ENCODE measurements at regions of chr11 and their contacts with region 1.

Region 1: DNA sequence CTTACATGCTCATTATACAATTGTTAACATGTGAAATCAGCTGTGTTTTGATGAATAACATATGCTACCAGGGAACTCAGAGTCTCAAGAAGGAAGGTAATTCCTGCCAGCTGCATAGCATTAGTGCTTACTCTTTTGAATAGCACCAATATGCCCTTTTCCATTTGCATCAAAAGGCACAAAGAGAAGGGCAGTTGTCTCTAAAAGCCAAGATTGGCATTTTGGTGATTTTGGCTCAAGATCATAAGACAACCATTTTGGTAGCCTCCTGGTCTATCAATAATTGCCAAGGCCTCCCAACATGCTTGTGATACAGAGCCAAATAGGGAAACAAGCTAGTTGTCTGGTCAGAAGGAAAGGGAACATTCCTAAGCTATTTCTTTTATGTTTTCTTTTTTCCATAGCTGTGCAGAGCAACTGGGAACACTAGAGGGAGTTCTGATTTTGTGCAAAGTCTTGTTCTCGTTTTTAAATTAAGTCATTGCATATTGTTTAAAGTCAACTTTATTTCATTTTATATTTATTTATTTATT is 416.7 kb upstream of the CHORDC1 start:
- DNase-seq: peak; percentile 34
- H3K4me3 Mint-ChIP-seq: no peak overlapping the region
- H3K27ac Mint-ChIP-seq: no peak overlapping the region
- H3K4me1 Mint-ChIP-seq: no peaks in the 10 kb centered on the region
- H3K27me3 Mint-ChIP-seq: no peaks in the 10 kb centered on the region
- CTCF ChIP-seq: peak; percentile 58

Region 2: GRCh38 chr11:90661233-90661632 is 21.7 kb after region 1 on chr11:
- CTCF ChIA-PET with region 1: no interaction called
- POLR2A ChIA-PET with region 1: no interaction called
- intact Hi-C with region 1: no loop called
- DNase-seq: no peak
- H3K4me3 Mint-ChIP-seq: no peak overlapping the region
- H3K27ac Mint-ChIP-seq: no peak overlapping the region
- H3K4me1 Mint-ChIP-seq: no peaks in the 10 kb centered on the region
- H3K27me3 Mint-ChIP-seq: no peaks in the 10 kb centered on the region
- CTCF ChIP-seq: no peak

Region 3: GRCh38 chr11:90930252-90930651 is 290.7 kb after region 1 on chr11:
- CTCF ChIA-PET with region 1: interaction called, 10 read pairs
- POLR2A ChIA-PET with region 1: no interaction called
- intact Hi-C with region 1: no loop called
- DNase-seq: no peak
- H3K4me3 Mint-ChIP-seq: no peak overlapping the region
- H3K27ac Mint-ChIP-seq: no peak overlapping the region
- H3K4me1 Mint-ChIP-seq: no peaks in the 10 kb centered on the region
- H3K27me3 Mint-ChIP-seq: no peaks in the 10 kb centered on the region
- CTCF ChIP-seq: no peak

Region 4: DNA sequence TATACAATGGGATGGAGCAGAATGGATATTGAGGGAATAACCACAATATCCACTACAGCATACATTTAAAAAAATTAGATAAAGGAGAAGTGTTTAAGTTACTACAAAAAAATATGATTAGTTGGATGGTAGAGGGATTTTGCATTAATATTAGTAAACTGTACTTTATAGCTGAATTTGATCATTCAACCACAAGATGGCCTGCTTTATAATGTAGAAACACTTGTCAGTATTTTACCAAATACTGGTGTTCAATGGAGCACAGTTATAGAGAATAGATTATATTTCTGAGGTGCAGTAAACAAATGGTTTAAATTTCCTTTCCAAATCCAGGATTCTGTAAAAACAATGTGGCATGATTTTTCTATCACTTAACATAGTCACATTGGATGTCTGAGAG is 402.1 kb after region 1 on chr11:
- CTCF ChIA-PET with region 1: interaction called, 5 read pairs
- POLR2A ChIA-PET with region 1: no interaction called
- intact Hi-C with region 1: loop called (anchors 10 kb)
- DNase-seq: peak; percentile 7
- H3K4me3 Mint-ChIP-seq: no peak overlapping the region
- H3K27ac Mint-ChIP-seq: no peak overlapping the region
- H3K4me1 Mint-ChIP-seq: no peaks in the 10 kb centered on the region
- H3K27me3 Mint-ChIP-seq: no peaks in the 10 kb centered on the region
- CTCF ChIP-seq: peak; percentile 16

Region 5: GRCh38 chr11:91248199-91248807 is 608.8 kb after region 1 on chr11:
- CTCF ChIA-PET with region 1: interaction called, 28 read pairs
- POLR2A ChIA-PET with region 1: no interaction called
- intact Hi-C with region 1: loop called (anchors 1 kb)
- DNase-seq: peak; percentile 71
- H3K4me3 Mint-ChIP-seq: no peak overlapping the region
- H3K27ac Mint-ChIP-seq: no peak overlapping the region
- H3K4me1 Mint-ChIP-seq: peaks cover 6% of the 10 kb centered on the region
- H3K27me3 Mint-ChIP-seq: no peaks in the 10 kb centered on the region
- CTCF ChIP-seq: peak; percentile 47

Measured in MCF 10A (cell line).